AG04449 (cell line): ENCODE measurements at regions of chr3 and their contacts with region 1.

Region 1: DNA sequence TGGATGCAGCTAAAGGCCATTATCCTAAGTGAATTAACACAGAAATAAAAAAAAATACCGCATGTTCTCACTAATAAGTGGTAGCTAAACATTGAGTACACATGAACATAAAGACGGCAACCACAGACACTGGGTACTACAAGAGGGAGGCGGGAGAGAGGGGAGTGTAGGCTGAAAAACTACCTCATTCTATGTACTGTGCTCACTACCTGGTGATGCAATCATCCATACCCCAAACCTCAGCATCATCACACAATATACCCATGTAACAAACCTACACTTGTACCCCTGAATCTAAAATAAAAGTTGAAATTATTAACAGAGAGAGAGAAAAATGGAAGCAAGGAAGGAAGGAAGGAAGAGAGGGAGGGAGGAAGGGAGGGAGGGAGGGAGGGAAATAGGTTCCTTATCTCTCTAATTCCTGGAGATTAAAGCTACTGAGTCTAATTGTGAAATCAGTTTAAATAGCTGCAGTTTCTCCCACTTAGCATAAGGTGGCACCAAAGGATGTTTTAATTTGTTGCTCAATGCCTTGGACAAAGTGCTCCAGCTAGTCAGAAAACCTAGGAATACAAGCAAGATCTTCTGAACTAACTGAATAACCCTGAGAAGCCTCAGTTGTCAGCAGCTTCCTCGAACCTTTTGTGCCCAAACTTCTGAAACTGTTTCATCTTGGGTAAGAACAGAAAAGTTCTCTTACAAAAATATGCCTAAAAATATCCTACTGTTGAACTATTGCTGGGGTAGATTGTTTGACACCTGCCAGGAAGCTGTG is 79.4 kb upstream of the ATP11B start:
- DNase-seq: peak; percentile 34
- H3K4me3 ChIP-seq: no peak overlapping the region
- CTCF ChIP-seq: peak; percentile 51

Region 2: GRCh38 chr3:182501856-182502255 is 212.1 kb before region 1 on chr3:
- CTCF ChIA-PET with region 1: no interaction called
- POLR2A ChIA-PET with region 1: no interaction called
- DNase-seq: no peak
- H3K4me3 ChIP-seq: no peak overlapping the region
- CTCF ChIP-seq: no peak

Region 3: DNA sequence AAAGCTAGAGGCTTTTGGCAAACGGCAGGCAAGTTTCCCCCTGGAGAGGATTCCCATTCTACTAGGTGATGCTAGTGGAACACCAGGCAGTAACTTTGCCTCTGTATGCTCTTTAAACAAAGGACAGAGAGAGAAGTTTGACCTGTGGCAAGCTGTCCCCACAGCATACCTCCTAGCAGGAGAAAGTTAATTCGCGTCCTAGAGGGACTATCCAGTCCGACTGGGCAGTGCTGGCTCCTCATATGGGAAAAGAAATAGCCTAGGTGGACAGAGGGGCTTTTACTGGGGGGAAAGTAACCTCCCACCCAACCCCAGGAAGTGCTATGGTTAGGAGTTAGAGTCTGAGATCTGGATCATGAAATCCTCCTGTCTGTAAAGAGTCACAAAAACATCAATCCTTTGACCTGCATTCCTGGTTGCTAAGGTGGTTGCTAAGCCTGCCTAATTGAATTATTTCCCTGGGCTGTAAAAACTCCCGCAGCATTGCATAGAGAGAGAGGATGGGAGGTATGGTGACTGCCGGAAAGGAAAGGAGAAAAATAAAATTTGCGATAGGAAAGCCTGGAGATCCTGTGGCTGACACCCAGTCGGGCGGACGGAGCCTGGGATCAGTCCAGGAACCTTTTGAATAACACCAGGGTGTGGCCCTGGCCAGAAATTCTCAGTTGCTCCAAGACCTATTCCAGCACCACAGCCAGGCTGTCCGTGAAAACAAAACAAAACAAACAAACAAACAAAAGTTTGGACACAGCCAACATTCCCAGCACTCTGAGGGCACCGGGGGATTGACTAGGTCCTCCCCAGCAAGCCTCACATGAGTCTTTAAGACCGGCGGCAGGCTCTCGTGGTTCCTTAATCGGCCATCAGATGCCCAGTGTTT is 11.7 kb after region 1 on chr3:
- CTCF ChIA-PET with region 1: interaction called, 55 read pairs
- POLR2A ChIA-PET with region 1: no interaction called
- DNase-seq: no peak
- H3K4me3 ChIP-seq: no peak overlapping the region
- CTCF ChIP-seq: no peak

Region 4: DNA sequence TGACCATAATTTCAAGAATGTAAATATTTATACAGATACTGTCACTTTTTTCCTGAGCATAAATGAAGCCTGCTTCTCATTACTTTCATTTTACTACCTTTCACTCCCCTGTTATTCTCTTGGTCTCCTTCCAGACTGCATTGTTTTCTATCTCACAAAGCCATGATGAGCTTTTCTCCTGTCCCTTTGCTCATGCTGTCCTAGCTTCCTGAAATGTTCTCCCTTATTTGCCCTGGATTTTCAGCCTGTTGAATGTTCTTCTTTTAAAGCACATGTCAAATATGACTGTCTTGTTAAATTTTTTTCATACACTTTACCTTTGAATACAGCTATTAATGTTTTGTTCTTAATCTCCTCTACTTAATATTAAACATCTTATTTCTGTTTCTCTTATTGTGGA is 111.0 kb after region 1 on chr3:
- CTCF ChIA-PET with region 1: interaction called, 13 read pairs
- POLR2A ChIA-PET with region 1: no interaction called
- DNase-seq: no peak
- H3K4me3 ChIP-seq: no peak overlapping the region
- CTCF ChIP-seq: no peak

Region 5: GRCh38 chr3:182837855-182838454 is 124.0 kb after region 1 on chr3:
- CTCF ChIA-PET with region 1: interaction called, 76 read pairs
- POLR2A ChIA-PET with region 1: no interaction called
- DNase-seq: no peak
- H3K4me3 ChIP-seq: no peak overlapping the region
- CTCF ChIP-seq: peak; percentile 12

Region 6: DNA sequence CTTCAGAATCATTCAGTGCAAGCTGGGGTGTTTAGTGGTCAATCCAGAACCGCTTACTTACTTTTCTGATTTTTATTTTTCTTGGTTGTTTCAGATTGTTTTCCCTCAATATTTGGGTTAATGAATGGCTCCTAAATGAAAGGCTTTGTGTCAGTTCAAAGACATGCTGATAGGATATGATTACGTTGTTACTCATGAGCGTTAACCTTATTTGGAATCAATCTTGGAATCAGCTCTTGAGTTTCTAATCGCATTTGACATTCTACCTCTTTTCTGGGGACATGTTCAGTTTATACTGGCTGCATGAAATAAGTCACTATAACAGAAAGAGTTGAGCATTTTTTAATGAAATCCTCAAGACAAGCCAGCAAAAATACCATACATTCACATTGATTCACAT is 129.5 kb after region 1 on chr3:
- CTCF ChIA-PET with region 1: interaction called, 24 read pairs
- POLR2A ChIA-PET with region 1: no interaction called
- DNase-seq: no peak
- H3K4me3 ChIP-seq: no peak overlapping the region
- CTCF ChIP-seq: no peak